GM10248 (cell line): ENCODE measurements at regions of chr17 and their contacts with region 1.

Region 1: DNA sequence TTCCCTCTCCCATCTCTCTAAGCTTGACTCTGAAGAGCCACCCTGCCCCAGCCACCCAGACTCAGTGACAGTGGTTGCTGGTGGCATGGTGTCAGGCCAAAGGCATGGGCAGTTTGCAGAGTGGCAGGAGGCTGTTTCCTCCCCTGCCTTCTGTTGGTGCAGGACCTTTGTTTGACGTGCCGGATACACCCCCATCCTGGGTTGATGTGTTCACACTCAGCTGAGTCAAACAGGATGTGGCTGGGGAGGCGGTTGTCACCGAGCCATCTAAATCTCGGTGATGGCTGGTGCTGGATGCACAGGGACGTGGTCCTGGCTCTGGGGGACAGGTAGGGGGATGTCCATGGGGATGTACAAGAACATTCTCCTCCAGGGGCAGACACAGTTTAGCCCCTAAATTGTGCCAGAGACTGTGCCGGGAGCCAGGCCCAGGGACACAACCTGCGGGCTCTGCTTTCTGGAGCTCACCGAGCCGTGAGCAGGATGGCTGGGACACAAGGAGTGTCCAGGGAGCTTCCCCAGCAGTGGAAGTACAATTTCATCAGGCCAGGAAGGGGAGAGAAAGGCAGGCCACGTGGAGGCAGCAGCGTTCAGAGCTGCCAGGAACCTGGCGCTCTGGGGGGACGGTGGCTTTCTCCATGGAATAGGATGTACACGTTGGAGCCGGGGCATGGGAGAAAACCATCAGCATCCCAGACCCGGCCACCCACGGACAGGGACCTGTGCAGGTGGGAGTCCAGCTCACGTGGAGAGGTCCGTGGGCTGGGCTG is 264.2 kb downstream of the SEC14L1 start:
- DNase-seq: peak; percentile 92
- CTCF ChIP-seq: no peak

Region 2: GRCh38 chr17:77420804-77421629 is 16.0 kb after region 1 on chr17:
- CTCF ChIA-PET with region 1: interaction called, 17 read pairs
- POLR2A ChIA-PET with region 1: no interaction called
- DNase-seq: no peak
- CTCF ChIP-seq: no peak

Region 3: DNA sequence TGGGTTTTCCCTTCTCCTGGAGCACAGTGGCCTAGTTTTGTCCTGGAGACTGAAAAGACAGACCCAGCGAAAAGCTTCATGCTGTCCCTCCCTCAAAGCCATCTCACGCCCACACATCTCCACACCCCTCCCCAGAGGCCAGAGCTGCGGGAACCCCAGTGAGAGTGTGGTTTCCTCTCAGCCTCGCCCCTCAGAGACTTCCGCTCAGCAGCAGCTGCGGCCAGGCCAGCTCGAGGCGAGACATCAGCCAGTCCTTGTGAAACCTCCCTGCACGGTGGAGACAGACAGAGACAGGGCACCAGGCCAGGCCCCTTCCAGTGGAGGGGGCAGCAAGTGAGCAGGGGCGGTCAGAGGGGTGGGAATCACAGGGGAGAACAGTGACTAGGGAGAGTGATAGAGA is 476.5 kb after region 1 on chr17:
- CTCF ChIA-PET with region 1: no interaction called
- POLR2A ChIA-PET with region 1: no interaction called
- DNase-seq: peak; percentile 94
- CTCF ChIP-seq: no peak